Activated CD4-positive, alpha-beta memory T cell treated with anti-CD3 and anti-CD28 coated beads for 36 hours (primary cell): ENCODE measurements at regions of chr11 and their contacts with region 1.

Region 1: DNA sequence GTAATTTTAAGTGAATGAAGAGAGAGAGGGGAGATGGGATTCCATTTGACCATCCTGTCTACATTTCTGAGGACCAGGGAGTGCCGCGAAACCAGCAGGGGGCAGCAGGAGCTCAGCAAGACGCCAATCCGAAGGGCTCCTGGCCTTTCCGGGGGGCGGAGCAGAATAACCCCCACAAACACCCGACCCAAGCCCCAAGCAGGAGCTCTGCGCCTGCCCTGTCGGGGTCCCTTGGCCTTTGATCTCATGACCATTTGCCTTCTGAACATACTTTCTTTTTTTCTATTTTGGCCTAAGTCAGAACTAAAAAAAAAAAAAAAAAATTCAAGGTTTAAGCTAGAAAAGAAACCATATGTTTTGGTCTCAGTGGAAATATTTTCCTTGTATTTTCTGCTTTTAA is 21.9 kb upstream of the SCN2B start:
- DNase-seq: peak; percentile 89
- H3K4me3 Mint-ChIP-seq: peak overlapping the region; percentile 30
- H3K27ac Mint-ChIP-seq: peak overlapping the region; percentile 72
- H3K4me1 Mint-ChIP-seq: peaks cover 16% of the 10 kb centered on the region
- H3K27me3 Mint-ChIP-seq: no peaks in the 10 kb centered on the region

Region 2: DNA sequence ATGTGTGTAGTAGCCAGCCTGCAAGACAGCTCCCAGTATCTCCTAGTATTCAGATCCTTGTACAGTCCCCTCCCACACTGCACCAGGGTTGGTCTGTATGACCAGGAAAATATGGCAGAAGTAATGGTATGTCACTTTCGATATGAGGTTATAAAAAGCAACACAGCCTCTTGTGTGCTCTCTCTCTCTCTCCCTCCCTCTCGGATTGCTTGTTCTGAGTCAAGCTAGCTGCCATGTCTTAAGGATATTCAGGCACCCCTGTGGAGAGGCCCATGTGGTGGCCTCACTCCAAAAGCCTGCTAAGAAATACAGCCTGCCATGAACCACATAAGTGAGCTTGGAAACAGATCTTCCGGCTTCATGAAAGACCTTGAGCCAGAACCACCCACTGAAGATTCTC is 347.3 kb before region 1 on chr11:
- CTCF ChIA-PET with region 1: no interaction called
- POLR2A ChIA-PET with region 1: no interaction called
- intact Hi-C with region 1: no loop called
- DNase-seq: no peak
- H3K4me3 Mint-ChIP-seq: no peak overlapping the region
- H3K27ac Mint-ChIP-seq: no peak overlapping the region
- H3K4me1 Mint-ChIP-seq: peaks cover 9% of the 10 kb centered on the region
- H3K27me3 Mint-ChIP-seq: peaks cover 4% of the 10 kb centered on the region

Region 3: GRCh38 chr11:118098996-118099837 is 99.2 kb before region 1 on chr11:
- CTCF ChIA-PET with region 1: no interaction called
- POLR2A ChIA-PET with region 1: no interaction called
- intact Hi-C with region 1: no loop called
- DNase-seq: no peak
- H3K4me3 Mint-ChIP-seq: no peak overlapping the region
- H3K27ac Mint-ChIP-seq: no peak overlapping the region
- H3K4me1 Mint-ChIP-seq: no peaks in the 10 kb centered on the region
- H3K27me3 Mint-ChIP-seq: no peaks in the 10 kb centered on the region

Region 4: GRCh38 chr11:118227865-118228785 is 29.8 kb after region 1 on chr11:
- CTCF ChIA-PET with region 1: interaction called, 12 read pairs
- POLR2A ChIA-PET with region 1: interaction called, 15 read pairs
- intact Hi-C with region 1: loop called (anchors 1 kb)
- DNase-seq: peak; percentile 43
- H3K4me3 Mint-ChIP-seq: peak overlapping the region; percentile 45
- H3K27ac Mint-ChIP-seq: no peak overlapping the region
- H3K4me1 Mint-ChIP-seq: peaks cover 47% of the 10 kb centered on the region
- H3K27me3 Mint-ChIP-seq: no peaks in the 10 kb centered on the region

Region 5: GRCh38 chr11:118251858-118252652 is 53.7 kb after region 1 on chr11 and contains the start of gene MPZL3:
- CTCF ChIA-PET with region 1: interaction called, 26 read pairs
- POLR2A ChIA-PET with region 1: interaction called, 6 read pairs
- intact Hi-C with region 1: loop called (anchors 1 kb)
- DNase-seq: peak; percentile 89
- H3K4me3 Mint-ChIP-seq: peak within 1 kb of the TSS; percentile 99
- H3K27ac Mint-ChIP-seq: peak within 1 kb of the TSS; percentile 97
- H3K4me1 Mint-ChIP-seq: peaks cover 37% of the 10 kb centered on the region
- H3K27me3 Mint-ChIP-seq: no peaks in the 10 kb centered on the region
- total RNA-seq, gene MPZL3: 47.3 to 49.0 TPM

Region 6: DNA sequence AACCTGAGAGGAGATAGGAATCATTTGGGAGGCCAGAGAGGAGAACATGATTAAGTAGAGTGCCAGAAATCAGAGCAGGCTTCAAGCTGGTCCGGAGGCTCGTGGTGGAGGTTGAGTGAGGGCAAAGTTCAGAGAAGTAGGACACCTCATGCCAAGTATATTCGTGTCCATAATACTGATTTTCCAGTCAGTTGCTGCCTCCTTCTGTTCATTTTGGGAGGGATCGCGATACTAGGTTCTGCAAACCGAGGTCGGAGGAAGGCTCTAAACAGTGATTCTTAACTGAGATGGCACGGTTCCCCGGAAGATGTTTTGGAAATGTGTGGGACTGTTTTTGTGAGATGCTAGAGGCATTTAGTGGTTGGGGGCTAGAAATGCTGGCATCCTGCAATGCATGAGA is 92.6 kb after region 1 on chr11:
- CTCF ChIA-PET with region 1: interaction called, 82 read pairs
- POLR2A ChIA-PET with region 1: interaction called, 6 read pairs
- intact Hi-C with region 1: loop called (anchors 1 kb)
- DNase-seq: peak; percentile 61
- H3K4me3 Mint-ChIP-seq: no peak overlapping the region
- H3K27ac Mint-ChIP-seq: peak overlapping the region; percentile 23
- H3K4me1 Mint-ChIP-seq: peaks cover 14% of the 10 kb centered on the region
- H3K27me3 Mint-ChIP-seq: no peaks in the 10 kb centered on the region

Region 7: DNA sequence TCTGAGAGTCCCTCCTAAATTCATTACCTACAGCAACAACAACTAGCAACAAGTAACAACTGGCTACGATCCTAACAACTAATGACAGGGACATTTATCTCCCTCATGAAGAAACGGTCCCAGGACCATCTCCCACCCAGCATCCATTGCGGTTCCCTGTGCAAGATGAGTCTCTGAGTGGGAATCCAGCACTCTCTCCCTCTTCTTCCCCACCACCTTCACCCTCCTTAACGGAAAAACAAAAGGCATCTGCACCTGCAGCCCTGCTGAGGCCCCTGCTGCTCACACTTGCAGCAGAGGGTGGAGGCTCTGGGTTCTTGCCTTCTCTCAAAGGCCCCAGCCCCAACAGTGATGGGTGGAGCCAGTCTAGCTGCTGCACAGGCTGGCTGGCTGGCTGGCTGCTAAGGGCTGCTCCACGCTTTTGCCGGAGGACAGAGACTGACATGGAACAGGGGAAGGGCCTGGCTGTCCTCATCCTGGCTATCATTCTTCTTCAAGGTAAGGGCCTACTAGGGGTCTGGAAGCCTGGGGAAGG is 145.7 kb after region 1 on chr11 and contains the start of gene CD3G:
- CTCF ChIA-PET with region 1: interaction called, 10 read pairs
- POLR2A ChIA-PET with region 1: interaction called, 3 read pairs
- intact Hi-C with region 1: loop called (anchors 2 kb)
- DNase-seq: peak; percentile 81
- H3K4me3 Mint-ChIP-seq: peak within 1 kb of the TSS; percentile 82
- H3K27ac Mint-ChIP-seq: peak within 1 kb of the TSS; percentile 98
- H3K4me1 Mint-ChIP-seq: peaks cover 52% of the 10 kb centered on the region
- H3K27me3 Mint-ChIP-seq: no peaks in the 10 kb centered on the region
- total RNA-seq, gene CD3G: 137 to 138 TPM

Region 8: GRCh38 chr11:118488480-118489109 is 290.2 kb after region 1 on chr11:
- CTCF ChIA-PET with region 1: interaction called, 4 read pairs
- POLR2A ChIA-PET with region 1: no interaction called
- intact Hi-C with region 1: loop called (anchors 2 kb)
- DNase-seq: peak; percentile 86
- H3K4me3 Mint-ChIP-seq: no peak overlapping the region
- H3K27ac Mint-ChIP-seq: no peak overlapping the region
- H3K4me1 Mint-ChIP-seq: peaks cover 5% of the 10 kb centered on the region
- H3K27me3 Mint-ChIP-seq: no peaks in the 10 kb centered on the region